ENCODE measurements at regions of chr19 and their contacts with region 1.

Region 1: GRCh38 chr19:10936661-10937084 is 8.1 kb downstream of the TIMM29 start:
- DNase-seq: no peak

Region 2: DNA sequence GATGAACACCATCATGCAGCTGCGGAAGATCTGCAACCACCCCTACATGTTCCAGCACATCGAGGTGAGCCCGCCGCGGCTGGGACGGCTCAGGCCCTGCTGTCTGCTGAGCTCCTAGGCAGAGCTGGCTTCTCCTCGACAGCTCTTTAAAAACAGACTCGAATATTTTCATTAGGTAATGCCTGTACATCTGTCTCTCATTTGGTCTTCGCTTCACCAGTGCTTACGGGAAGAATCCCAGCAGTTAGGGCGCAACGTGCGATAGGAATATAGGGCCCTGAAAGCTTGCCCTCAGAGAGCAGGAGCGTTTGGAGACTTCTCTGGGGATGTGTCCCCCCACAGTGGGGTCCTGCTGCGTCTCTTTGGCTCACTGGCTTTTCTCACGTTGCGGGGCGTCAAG is 88.8 kb after region 1 on chr19:
- intact Hi-C with region 1: loop called in 1 of 2 experiments (anchors 5 kb)
- DNase-seq: no peak

Measured in posterior vena cava (tissue), 2 donors.